SK-N-SH (cell line): ENCODE measurements at regions of chr16 and their contacts with region 1.

Region 1: GRCh38 chr16:3983081-3983520 is 102.6 kb upstream of the CREBBP start:
- DNase-seq: peak; percentile 91
- H3K4me3 ChIP-seq: no peak overlapping the region; a peak in 1 of 4 replicates
- H3K27ac ChIP-seq: no peak overlapping the region
- H3K4me1 ChIP-seq: peaks cover 13% of the 10 kb centered on the region in 2 experiments; a peak in 3 of 4 replicates
- H3K27me3 ChIP-seq: no peaks in the 10 kb centered on the region
- CTCF ChIP-seq: peak; percentile 70
- EP300 ChIP-seq: no peak
- RAD21 ChIP-seq: peak; percentile 95

Region 2: DNA sequence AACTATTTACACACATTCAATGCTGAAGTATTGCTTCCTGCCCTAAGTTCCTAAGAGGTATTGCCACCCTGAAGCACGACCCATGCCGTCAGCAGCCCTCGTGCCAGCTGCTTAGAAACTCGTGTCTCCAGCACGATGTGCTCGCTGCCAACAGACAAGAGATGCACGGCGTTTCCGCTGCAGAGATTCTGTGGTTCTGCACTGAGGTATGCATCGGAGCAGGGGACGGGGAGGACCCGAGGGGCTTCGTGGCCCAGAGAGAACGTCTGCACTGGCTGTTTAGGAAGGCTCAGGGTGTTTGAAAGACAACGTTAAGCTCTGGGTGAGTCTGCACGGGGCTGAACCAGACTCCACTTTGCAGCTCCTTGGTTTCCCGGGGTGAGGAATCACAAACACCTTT is 19.9 kb before region 1 on chr16:
- CTCF ChIA-PET with region 1: interaction called, 13 read pairs
- POLR2A ChIA-PET with region 1: no interaction called
- DNase-seq: no peak
- H3K4me3 ChIP-seq: no peak overlapping the region
- H3K27ac ChIP-seq: no peak overlapping the region
- H3K4me1 ChIP-seq: no peaks in the 10 kb centered on the region
- H3K27me3 ChIP-seq: 0 out of 2 replicates have a peak, but pooled peaks cover under 1% of the 10 kb centered on the region
- CTCF ChIP-seq: no peak
- EP300 ChIP-seq: no peak
- RAD21 ChIP-seq: no peak

Region 3: DNA sequence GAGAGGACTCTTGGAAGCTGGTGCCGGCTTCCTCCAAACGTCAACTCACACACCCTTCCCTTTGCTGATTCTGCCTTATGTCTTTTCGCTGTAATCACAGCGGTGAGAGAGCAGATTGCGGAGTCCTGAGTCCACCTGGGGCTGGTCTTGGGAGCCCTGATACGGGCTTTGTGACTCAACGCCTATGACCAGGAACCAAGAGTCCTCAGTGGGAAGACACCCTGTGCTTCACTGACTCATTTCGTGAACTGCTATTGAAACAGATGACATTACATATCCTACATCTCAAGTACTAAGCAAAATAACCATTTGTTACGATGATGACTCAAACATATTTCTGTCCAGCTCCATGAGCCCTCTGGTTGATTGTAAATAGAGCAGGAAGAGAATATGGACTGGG is 11.8 kb before region 1 on chr16:
- CTCF ChIA-PET with region 1: interaction called, 16 read pairs
- POLR2A ChIA-PET with region 1: no interaction called
- DNase-seq: no peak
- H3K4me3 ChIP-seq: no peak overlapping the region
- H3K27ac ChIP-seq: peak overlapping the region in 1 of 2 experiments; percentile 50; a peak in 1 of 4 replicates
- H3K4me1 ChIP-seq: peaks cover 0 to 2% of the 10 kb centered on the region in 2 experiments; a peak in 2 of 4 replicates
- H3K27me3 ChIP-seq: no peaks in the 10 kb centered on the region
- CTCF ChIP-seq: no peak
- EP300 ChIP-seq: no peak
- RAD21 ChIP-seq: no peak

Region 4: GRCh38 chr16:3999479-4000325 is 16.6 kb after region 1 on chr16:
- CTCF ChIA-PET with region 1: interaction called, 16 read pairs
- POLR2A ChIA-PET with region 1: no interaction called
- DNase-seq: no peak
- H3K4me3 ChIP-seq: no peak overlapping the region
- H3K27ac ChIP-seq: no peak overlapping the region
- H3K4me1 ChIP-seq: no peaks in the 10 kb centered on the region; a peak in 2 of 4 replicates
- H3K27me3 ChIP-seq: no peaks in the 10 kb centered on the region
- CTCF ChIP-seq: no peak
- EP300 ChIP-seq: no peak
- RAD21 ChIP-seq: no peak

Region 5: GRCh38 chr16:4116337-4117249 is 133.5 kb after region 1 on chr16 and contains the start of gene ADCY9:
- CTCF ChIA-PET with region 1: interaction called, 13 read pairs
- POLR2A ChIA-PET with region 1: no interaction called
- DNase-seq: peak; percentile 100
- H3K4me3 ChIP-seq: peak within 1 kb of the TSS; percentile 58 to 67
- H3K27ac ChIP-seq: peak within 1 kb of the TSS in 1 of 2 experiments; percentile 40; a peak in 1 of 4 replicates
- H3K4me1 ChIP-seq: peaks cover 5 to 28% of the 10 kb centered on the region in 2 experiments; a peak in 3 of 4 replicates
- H3K27me3 ChIP-seq: no peaks in the 10 kb centered on the region
- CTCF ChIP-seq: no peak
- EP300 ChIP-seq: no peak
- RAD21 ChIP-seq: no peak
- polyA plus RNA-seq, gene ADCY9: 2.7 and 5.2 TPM in 2 replicates

Region 6: DNA sequence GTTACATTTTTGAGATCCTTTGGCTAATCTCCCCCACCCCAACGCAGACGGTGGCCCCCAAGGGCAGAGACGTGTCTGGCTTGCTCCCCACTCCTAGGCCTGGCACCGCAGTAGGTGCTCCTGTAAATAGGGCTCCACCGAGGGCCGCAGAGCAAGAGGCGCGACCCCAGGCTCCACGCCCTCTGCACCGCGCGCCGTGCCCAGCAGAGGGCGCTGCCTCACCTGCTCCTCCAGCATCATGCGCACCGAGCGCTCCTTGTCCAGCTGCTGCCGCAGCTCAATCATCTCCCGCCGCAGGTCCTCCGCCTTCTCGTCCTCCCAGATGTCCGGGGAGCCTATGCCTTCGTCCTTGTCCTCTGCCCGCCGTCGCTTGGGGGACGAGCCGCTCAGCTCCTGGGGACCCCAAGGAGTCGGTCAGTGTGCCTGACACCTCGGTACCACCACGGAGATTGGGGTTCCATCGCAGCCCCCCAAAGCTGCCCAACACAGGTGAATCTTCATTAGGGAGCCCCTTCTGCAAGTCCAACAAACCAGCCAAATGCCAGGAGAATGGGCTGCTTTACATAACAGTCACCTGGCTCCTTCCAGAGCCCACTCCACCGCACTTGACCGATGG is 278.6 kb after region 1 on chr16:
- CTCF ChIA-PET with region 1: interaction called, 13 read pairs
- POLR2A ChIA-PET with region 1: no interaction called
- DNase-seq: peak; percentile 78
- H3K4me3 ChIP-seq: no peak overlapping the region; a peak in 1 of 4 replicates
- H3K27ac ChIP-seq: no peak overlapping the region
- H3K4me1 ChIP-seq: peaks cover 6 to 23% of the 10 kb centered on the region in 2 experiments; a peak in 1 of 4 replicates
- H3K27me3 ChIP-seq: no peaks in the 10 kb centered on the region
- CTCF ChIP-seq: peak; percentile 68
- EP300 ChIP-seq: no peak
- RAD21 ChIP-seq: peak; percentile 55

Region 7: DNA sequence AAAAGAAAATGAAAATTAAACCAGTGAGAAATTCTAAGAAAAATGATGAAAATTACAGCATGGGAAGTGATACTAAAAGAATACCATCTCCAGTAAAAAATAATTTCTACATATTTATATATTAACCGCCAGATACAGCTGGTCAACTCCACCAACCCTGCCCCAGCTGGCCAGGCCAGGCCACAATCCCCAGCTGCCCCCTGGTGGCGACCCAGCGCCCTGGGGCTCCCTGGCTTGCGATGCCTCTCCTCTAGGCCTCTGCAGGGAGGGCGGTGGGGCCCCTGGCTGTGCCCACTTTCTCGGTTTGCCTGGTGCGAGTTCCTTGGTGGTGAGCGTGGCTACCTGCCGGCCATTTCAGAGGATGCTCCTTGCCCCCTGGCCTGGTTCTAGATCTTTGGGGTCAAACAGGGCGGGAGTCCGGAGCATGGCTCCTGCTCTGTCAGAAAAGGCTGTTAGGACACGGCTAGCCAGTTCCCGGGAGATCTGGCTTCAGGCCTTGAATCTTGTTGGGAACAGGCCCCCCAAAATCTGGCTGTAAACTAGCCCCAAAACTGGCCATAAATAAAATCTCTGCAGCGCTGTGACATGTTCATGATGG is 347.3 kb after region 1 on chr16:
- CTCF ChIA-PET with region 1: interaction called, 27 read pairs
- POLR2A ChIA-PET with region 1: no interaction called
- DNase-seq: peak; percentile 94
- H3K4me3 ChIP-seq: no peak overlapping the region
- H3K27ac ChIP-seq: no peak overlapping the region
- H3K4me1 ChIP-seq: peaks cover 15 to 21% of the 10 kb centered on the region in 2 experiments; a peak in 3 of 4 replicates
- H3K27me3 ChIP-seq: no peaks in the 10 kb centered on the region
- CTCF ChIP-seq: peak; percentile 96
- EP300 ChIP-seq: no peak
- RAD21 ChIP-seq: peak; percentile 93